Posterior cingulate gyrus (tissue), 11 donors: ENCODE measurements at regions of chr5 and their contacts with region 1.

Region 1: DNA sequence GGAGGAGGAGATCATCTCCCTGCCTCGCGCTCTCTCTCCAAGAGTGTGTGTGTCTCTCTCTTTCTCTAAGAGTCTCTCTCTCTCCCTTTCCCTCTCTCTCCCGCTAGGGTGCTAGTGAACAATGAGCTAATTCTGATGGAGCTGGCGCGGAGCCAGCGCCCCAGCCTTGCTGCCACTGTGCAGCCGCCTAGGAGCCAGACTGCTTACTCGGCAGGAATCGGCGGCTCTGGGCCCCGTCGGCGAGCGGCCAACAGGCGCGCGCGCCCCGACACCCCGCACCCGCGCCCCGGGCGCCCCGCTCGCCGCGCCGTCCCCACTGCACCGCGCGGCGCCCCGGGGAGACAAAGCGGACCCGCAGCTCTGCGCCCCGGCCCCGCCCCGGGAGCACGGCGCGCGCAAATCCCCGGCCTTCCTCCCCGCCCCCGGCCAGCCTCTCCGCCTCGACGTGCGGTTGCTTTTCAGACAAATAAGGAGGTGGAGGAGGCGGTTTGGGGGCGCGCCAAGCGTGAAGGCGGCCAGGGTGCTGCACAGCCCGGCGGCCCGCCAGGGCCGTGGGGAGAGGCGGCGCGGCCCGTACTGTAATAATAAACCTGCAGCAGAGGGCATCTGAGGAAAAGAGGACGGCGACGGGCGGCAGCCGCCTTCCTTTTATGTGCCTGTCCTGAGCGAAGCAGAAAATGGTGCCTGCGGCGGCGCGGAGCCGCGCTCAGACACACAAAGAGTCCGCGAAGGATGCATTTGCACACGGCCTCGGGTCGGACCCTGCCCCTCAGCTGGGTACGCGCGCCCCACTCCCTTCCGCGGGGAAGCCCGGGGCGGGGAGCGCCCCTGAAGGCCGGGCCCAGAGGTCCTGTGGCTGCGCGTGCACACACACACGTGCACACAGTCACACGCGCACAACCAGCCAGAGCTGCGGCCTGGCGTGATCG is 625 bp upstream of the NREP start:
- DNase-seq: peak; percentile 84 to 98 (median 90)

Region 2: DNA sequence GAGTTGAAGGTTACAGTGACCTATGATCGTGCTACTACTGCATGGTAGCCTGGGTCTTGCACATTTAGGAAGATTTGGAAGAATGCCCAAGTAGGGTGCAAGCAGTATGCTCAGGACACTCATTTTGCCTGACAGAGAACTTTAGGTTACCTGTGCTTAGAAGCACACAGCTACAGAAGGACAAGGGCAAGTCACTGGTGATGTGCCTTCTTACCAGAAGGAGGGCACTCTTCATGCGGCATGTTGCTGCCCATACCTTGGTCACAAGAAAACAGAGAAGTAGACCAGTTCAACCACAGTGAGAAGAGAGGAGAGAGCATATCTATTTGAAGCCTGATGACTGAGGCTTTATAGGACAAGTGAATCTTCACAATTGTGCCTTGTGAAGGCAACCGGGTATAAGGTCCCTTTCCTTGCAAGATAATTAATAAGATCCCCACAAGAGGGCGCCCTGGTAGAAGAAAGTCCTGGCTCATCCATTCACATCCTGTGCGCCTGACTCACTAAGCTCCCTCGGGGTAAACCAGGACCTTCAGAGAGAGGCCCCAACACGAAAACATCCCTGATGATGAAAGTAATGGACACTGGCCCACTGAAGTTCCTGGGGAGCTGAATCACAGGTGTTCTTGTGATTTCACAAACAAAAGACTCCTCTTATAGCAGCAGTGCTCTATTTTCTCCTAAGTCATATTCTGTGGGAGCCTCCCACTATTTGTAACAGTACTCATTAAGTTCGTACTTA is 207.2 kb before region 1 on chr5:
- intact Hi-C with region 1: loop called (anchors 10 kb)
- DNase-seq: peak in 9 of 10 donors; percentile 19 to 88 (median 64)

Region 3: GRCh38 chr5:112154940-112155686 is 397.5 kb after region 1 on chr5:
- intact Hi-C with region 1: loop called (anchors 10 kb)
- DNase-seq: no peak